ENCODE measurements at regions of chr10 and their contacts with region 1.

Region 1: GRCh38 chr10:8731121-8732095 is 676.9 kb downstream of the GATA3 start:
- DNase-seq: no peak
- H3K27ac ChIP-seq: no peak overlapping the region
- CTCF ChIP-seq: no peak

Region 2: DNA sequence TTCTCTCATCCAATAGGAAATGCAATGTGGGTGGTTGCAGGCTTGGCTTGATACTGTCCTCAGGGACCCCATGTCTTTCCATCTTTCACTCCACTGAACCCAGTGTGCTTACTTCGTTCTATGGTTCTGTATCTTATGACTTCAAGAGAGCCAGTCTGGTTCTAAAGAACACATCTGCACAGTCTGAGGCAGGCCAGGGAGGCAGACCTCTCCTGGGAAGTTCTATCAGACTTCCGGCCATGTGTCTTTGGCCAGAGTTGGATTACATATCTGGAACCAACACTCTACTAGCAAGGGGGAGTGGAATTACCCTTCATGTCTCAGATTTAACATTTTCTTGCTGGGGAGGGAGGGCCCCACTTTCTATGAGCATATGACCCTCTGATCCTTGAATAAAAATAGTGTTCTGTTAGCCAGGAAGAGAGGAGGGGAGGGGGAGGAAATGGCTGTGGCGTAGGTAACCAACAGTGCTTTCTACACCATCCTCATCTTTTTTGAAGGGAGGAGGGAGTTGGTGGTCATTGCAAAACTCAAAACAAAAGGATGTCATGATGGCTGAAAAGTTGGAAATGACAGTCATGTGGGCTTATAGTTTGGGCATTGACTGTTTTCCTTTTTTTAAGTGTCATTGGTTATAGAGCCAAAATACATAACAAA is 306.7 kb before region 1 on chr10:
- CTCF ChIA-PET with region 1: no interaction called
- POLR2A ChIA-PET with region 1: interaction called, 11 read pairs
- DNase-seq: no peak
- H3K27ac ChIP-seq: no peak overlapping the region
- CTCF ChIP-seq: no peak

Measured in RWPE1 (cell line).